Endothelial cell of umbilical vein (primary cell): ENCODE measurements at regions of chr1 and their contacts with region 1.

Region 1: GRCh38 chr1:234722904-234723720 is 113.1 kb upstream of the IRF2BP2 start:
- DNase-seq: peak; percentile 21
- H3K4me3 ChIP-seq: peak overlapping the region in 1 of 3 experiments; percentile 8
- H3K27ac ChIP-seq: peak overlapping the region; percentile 91
- H3K4me1 ChIP-seq: peaks cover 82% of the 10 kb centered on the region
- H3K27me3 ChIP-seq: no peaks in the 10 kb centered on the region
- CTCF ChIP-seq: no peak
- POLR2A ChIP-seq: no peak

Region 2: GRCh38 chr1:233459470-233459945 is 1263.6 kb before region 1 on chr1:
- CTCF ChIA-PET with region 1: no interaction called
- POLR2A ChIA-PET with region 1: no interaction called
- dilution Hi-C with region 1: no loop called
- intact Hi-C with region 1: no loop called
- DNase-seq: no peak
- H3K4me3 ChIP-seq: no peak overlapping the region
- H3K27ac ChIP-seq: no peak overlapping the region
- H3K4me1 ChIP-seq: no peaks in the 10 kb centered on the region
- H3K27me3 ChIP-seq: no peaks in the 10 kb centered on the region
- CTCF ChIP-seq: no peak
- POLR2A ChIP-seq: no peak

Region 3: DNA sequence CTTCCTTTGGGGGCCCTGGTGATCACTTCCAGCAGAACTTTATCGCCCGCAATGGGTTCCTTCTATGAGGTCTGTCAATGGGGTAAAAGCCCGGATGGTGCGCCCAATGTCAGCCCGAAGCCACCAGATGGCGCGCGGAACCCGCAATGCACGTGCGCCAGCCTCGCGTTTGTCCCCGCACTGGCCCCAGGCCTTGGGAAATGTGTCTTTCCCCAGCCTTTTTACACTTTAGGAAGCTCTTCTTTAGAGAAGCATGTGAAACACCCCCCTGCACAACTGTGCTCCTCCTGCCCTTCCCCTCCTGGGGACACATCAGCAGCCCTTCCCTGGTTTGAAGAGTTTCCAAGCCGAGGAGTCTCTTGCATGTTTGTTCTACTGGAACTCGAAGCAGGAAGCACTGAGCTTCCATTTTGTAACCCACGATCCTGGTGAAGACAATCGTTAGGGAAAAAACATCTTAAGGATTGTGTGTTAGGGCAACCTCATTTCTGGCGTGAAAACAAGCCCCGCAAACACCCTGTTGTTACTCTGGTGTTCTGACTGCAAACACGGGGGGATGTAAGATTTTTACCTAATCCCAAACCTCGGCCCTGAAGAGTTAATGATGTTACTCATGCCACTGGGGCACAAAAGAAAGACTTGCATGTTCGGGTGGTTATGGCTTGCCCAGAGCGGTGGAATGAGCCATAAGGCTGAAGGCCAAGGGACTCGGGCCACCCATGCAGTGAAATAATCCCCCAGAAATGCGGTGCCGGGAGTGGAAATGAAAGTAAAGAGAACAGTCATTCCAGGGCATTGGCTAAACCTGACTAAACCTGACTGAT is 223.8 kb before region 1 on chr1:
- CTCF ChIA-PET with region 1: interaction called, 14 read pairs
- POLR2A ChIA-PET with region 1: interaction called, 3 read pairs
- dilution Hi-C with region 1: no loop called
- intact Hi-C with region 1: loop called (anchors 1 kb)
- DNase-seq: peak; percentile 84
- H3K4me3 ChIP-seq: no peak overlapping the region
- H3K27ac ChIP-seq: peak overlapping the region; percentile 26
- H3K4me1 ChIP-seq: peaks cover 8% of the 10 kb centered on the region
- H3K27me3 ChIP-seq: no peaks in the 10 kb centered on the region
- CTCF ChIP-seq: peak; percentile 90 to 94
- POLR2A ChIP-seq: no peak

Region 4: GRCh38 chr1:234631721-234632125 is 91.4 kb before region 1 on chr1:
- CTCF ChIA-PET with region 1: interaction called, 11 read pairs
- POLR2A ChIA-PET with region 1: interaction called, 10 read pairs
- dilution Hi-C with region 1: no loop called
- intact Hi-C with region 1: loop called (anchors 1 kb)
- DNase-seq: peak; percentile 98
- H3K4me3 ChIP-seq: no peak overlapping the region
- H3K27ac ChIP-seq: peak overlapping the region; percentile 95
- H3K4me1 ChIP-seq: peaks cover 38% of the 10 kb centered on the region
- H3K27me3 ChIP-seq: no peaks in the 10 kb centered on the region
- CTCF ChIP-seq: no peak
- POLR2A ChIP-seq: no peak

Region 5: DNA sequence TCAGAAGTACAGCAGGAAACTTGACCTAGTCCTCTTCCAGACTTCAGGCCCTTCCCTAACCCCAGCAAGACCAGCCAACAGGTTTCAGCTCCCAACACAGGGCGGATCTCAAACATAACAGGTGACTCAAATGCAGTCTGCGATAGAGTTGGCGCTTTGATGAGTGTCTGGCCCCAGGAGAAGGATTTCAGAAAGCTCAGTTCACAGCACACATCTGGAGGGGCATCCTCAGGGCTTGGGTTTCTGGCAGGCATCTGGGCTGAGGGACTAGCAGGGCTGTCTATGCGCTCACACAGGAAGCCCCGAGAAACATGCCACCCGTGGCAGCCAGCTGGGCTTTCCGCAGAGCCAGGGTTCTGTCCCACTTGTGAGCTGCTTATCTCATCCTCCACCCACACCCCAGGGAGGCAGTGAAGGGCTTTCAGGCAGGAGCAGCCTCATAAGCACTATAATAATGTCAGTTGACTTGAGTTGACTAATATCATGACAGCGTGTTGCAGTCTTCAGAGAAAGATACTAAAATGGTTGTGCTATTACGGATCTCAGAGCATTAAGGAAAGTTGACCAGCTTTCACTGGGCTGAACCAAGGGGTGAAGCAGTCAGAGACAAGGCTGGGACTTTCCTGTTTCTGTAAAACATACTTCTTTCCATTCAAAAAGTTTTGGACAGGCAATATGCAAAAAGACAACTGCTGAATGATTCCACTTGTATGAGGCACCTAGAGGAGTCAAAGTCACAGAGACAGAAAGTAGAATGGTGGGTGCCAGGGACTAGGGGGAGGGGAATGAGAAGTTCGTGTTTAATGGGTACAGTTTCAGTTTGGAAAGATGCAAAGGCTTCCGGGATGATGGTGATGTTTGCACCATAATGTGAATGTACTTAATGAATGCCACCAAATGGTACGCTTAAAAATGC is 119.9 kb after region 1 on chr1:
- CTCF ChIA-PET with region 1: interaction called, 7 read pairs
- POLR2A ChIA-PET with region 1: interaction called, 4 read pairs
- dilution Hi-C with region 1: loop called (anchors 25 kb)
- intact Hi-C with region 1: loop called (anchors 1 kb)
- DNase-seq: no peak
- H3K4me3 ChIP-seq: no peak overlapping the region
- H3K27ac ChIP-seq: no peak overlapping the region
- H3K4me1 ChIP-seq: peaks cover 17% of the 10 kb centered on the region
- H3K27me3 ChIP-seq: no peaks in the 10 kb centered on the region
- CTCF ChIP-seq: no peak
- POLR2A ChIP-seq: no peak

Region 6: GRCh38 chr1:234925440-234926263 is 202.5 kb after region 1 on chr1:
- CTCF ChIA-PET with region 1: interaction called, 6 read pairs
- POLR2A ChIA-PET with region 1: no interaction called
- dilution Hi-C with region 1: no loop called
- intact Hi-C with region 1: loop called (anchors 1 kb)
- DNase-seq: peak; percentile 94
- H3K4me3 ChIP-seq: no peak overlapping the region
- H3K27ac ChIP-seq: peak overlapping the region; percentile 90
- H3K4me1 ChIP-seq: peaks cover 41% of the 10 kb centered on the region
- H3K27me3 ChIP-seq: no peaks in the 10 kb centered on the region
- CTCF ChIP-seq: no peak
- POLR2A ChIP-seq: no peak

Region 7: GRCh38 chr1:234955107-234955731 is 232.1 kb after region 1 on chr1:
- CTCF ChIA-PET with region 1: no interaction called
- POLR2A ChIA-PET with region 1: no interaction called
- dilution Hi-C with region 1: no loop called
- intact Hi-C with region 1: no loop called
- DNase-seq: peak; percentile 16
- H3K4me3 ChIP-seq: no peak overlapping the region
- H3K27ac ChIP-seq: no peak overlapping the region
- H3K4me1 ChIP-seq: peaks cover 8% of the 10 kb centered on the region
- H3K27me3 ChIP-seq: no peaks in the 10 kb centered on the region
- CTCF ChIP-seq: no peak
- POLR2A ChIP-seq: no peak

Region 8: GRCh38 chr1:234997201-234997895 is 274.2 kb after region 1 on chr1:
- CTCF ChIA-PET with region 1: interaction called, 10 read pairs
- POLR2A ChIA-PET with region 1: no interaction called
- dilution Hi-C with region 1: no loop called
- intact Hi-C with region 1: loop called (anchors 1 kb)
- DNase-seq: peak; percentile 99
- H3K4me3 ChIP-seq: no peak overlapping the region
- H3K27ac ChIP-seq: peak overlapping the region; percentile 95
- H3K4me1 ChIP-seq: peaks cover 28% of the 10 kb centered on the region
- H3K27me3 ChIP-seq: no peaks in the 10 kb centered on the region
- CTCF ChIP-seq: no peak
- POLR2A ChIP-seq: peak; percentile 58